Esophagus muscularis mucosa (tissue), 4 donors: ENCODE measurements at regions of chr4 and their contacts with region 1.

Region 1: GRCh38 chr4:175560604-175561003 is 251.5 kb downstream of the GPM6A start:
- DNase-seq: no peak
- H3K4me3 ChIP-seq: no peak overlapping the region
- H3K27ac ChIP-seq: no peak overlapping the region
- H3K4me1 ChIP-seq: no peaks in the 10 kb centered on the region
- H3K27me3 ChIP-seq: no peaks in the 10 kb centered on the region
- CTCF ChIP-seq: peak; percentile 46 to 57 (median 56)
- EP300 ChIP-seq: no peak
- POLR2A ChIP-seq: no peak

Region 2: GRCh38 chr4:175891851-175892250 is 331.2 kb after region 1 on chr4:
- intact Hi-C with region 1: loop called (anchors 5 kb)
- DNase-seq: no peak
- H3K4me3 ChIP-seq: no peak overlapping the region
- H3K27ac ChIP-seq: peak overlapping the region in 2 of 4 donors; percentile 8 to 10
- H3K4me1 ChIP-seq: peaks cover 0 to 16% (median 6%) of the 10 kb centered on the region in 4 donors
- H3K27me3 ChIP-seq: no peaks in the 10 kb centered on the region
- CTCF ChIP-seq: peak; percentile 23 to 44 (median 29)
- EP300 ChIP-seq: no peak
- POLR2A ChIP-seq: no peak

Region 3: DNA sequence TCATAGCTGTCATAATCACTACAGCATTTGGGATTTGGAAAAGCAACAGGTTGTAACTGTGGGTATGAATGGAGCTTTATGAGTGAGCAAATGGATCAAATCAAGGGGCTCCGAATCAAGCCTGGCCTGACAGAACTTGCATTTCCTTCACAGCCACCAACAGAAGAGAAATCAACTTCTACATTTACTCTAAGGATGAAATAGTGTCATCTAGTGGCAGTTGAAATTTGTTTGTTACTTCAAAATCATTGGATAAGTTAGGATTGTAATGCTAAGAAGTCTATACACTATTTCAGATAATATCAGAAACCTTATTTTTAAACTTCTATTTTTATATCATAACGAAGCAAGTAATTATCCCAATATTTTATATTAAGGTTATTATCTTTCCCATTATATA is 494.3 kb after region 1 on chr4:
- intact Hi-C with region 1: loop called (anchors 10 kb)
- DNase-seq: no peak
- H3K4me3 ChIP-seq: no peak overlapping the region
- H3K27ac ChIP-seq: no peak overlapping the region
- H3K4me1 ChIP-seq: no peaks in the 10 kb centered on the region
- H3K27me3 ChIP-seq: no peaks in the 10 kb centered on the region
- CTCF ChIP-seq: peak; percentile 35 to 48 (median 39)
- EP300 ChIP-seq: no peak
- POLR2A ChIP-seq: no peak

Region 4: GRCh38 chr4:176090115-176090514 is 529.5 kb after region 1 on chr4:
- intact Hi-C with region 1: no loop called
- DNase-seq: no peak
- H3K4me3 ChIP-seq: no peak overlapping the region
- H3K27ac ChIP-seq: no peak overlapping the region
- H3K4me1 ChIP-seq: no peaks in the 10 kb centered on the region
- H3K27me3 ChIP-seq: no peaks in the 10 kb centered on the region
- CTCF ChIP-seq: no peak
- EP300 ChIP-seq: no peak
- POLR2A ChIP-seq: no peak

Region 5: GRCh38 chr4:176123710-176124407 is 563.3 kb after region 1 on chr4:
- intact Hi-C with region 1: loop called (anchors 10 kb)
- DNase-seq: no peak
- H3K4me3 ChIP-seq: no peak overlapping the region
- H3K27ac ChIP-seq: no peak overlapping the region
- H3K4me1 ChIP-seq: no peaks in the 10 kb centered on the region
- H3K27me3 ChIP-seq: no peaks in the 10 kb centered on the region
- CTCF ChIP-seq: peak; percentile 25 to 58 (median 43)
- EP300 ChIP-seq: no peak
- POLR2A ChIP-seq: no peak

Region 6: DNA sequence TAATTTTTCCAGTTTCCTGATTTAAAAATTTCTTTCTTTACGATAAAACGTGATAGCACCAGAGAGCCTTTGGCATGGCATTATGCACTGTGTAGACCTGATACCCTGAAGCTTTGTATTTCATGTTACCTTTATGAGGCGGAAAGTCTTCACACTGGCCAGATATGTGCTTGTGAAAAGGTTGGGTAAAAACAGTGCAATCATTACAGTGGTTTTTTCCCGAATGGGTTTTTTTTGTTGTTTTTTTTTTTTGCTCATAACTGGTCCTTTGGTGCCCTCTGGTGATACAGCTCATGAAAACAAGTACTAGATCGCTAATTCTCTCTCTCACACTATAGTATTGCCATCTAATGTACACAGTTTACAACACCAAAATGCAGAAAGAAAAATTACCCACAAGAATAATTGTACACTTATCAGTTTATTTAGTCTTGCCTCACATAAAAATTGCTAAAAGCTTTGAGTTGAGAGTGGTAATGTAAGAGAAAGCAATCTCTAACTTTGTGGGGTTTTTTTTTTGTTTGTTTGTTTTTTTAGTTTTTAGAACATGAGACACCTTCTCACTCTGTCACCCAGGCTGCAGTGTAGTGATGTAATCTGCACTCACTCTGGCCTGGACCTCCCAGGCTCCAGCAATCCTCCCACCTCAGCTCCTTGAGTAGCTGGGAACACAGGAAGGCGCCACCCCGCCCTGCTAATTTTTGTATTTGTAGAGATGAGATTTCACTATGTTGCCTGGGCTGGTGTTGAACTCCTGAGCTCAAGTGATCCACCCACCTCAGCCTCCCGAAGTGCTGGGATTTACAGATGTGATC is 780.5 kb after region 1 on chr4:
- intact Hi-C with region 1: loop called (anchors 5 kb)
- DNase-seq: no peak
- H3K4me3 ChIP-seq: peak overlapping the region in 2 of 4 donors; percentile 30 to 32
- H3K27ac ChIP-seq: no peak overlapping the region
- H3K4me1 ChIP-seq: peaks cover 0 to 17% (median 7%) of the 10 kb centered on the region in 4 donors
- H3K27me3 ChIP-seq: no peaks in the 10 kb centered on the region
- CTCF ChIP-seq: peak; percentile 35 to 57 (median 55)
- EP300 ChIP-seq: no peak
- POLR2A ChIP-seq: no peak